Heart left ventricle (tissue), 16 donors: ENCODE measurements at regions of chr11 and their contacts with region 1.

Region 1: DNA sequence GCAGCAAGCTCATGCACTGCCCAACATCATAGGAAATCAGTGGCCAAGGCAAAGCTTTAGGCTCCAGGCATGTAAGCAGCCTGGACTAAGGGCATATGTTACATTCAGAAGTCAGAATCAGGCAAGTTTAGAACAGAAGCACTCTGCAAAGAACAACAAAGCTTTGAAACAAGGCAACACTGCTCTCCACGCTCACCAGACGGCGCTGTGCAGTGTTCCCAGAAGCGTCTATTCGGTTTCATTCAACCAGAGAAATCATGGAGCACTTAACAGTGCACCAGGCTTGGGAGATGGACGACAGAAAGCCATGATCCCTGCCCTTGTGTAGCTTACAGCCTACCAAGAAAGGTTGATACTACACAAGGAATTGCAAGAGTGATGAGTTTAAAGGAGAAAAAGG is 555.8 kb downstream of the BUD13 start:
- DNase-seq: peak in 1 of 5 donors; percentile 42
- ATAC-seq: peak in 2 of 4 donors; percentile 16 to 64
- H3K4me3 ChIP-seq: no peak overlapping the region
- H3K27ac ChIP-seq: no peak overlapping the region
- H3K4me1 ChIP-seq: peaks cover 0 to 7% (median 0%) of the 10 kb centered on the region in 12 donors
- H3K27me3 ChIP-seq: no peaks in the 10 kb centered on the region
- CTCF ChIP-seq: peak in 11 of 12 donors; percentile 40 to 83 (median 61)
- POLR2A ChIP-seq: no peak

Region 2: GRCh38 chr11:115941481-115941993 is 275.5 kb before region 1 on chr11:
- intact Hi-C with region 1: no loop called
- DNase-seq: peak; percentile 55 to 84 (median 77)
- ATAC-seq: peak; percentile 46 to 89 (median 86)
- H3K4me3 ChIP-seq: no peak overlapping the region
- H3K27ac ChIP-seq: peak overlapping the region in 6 of 12 donors; percentile 24 to 75 (median 62)
- H3K4me1 ChIP-seq: peaks cover 0 to 17% (median 0%) of the 10 kb centered on the region in 12 donors
- H3K27me3 ChIP-seq: peaks cover 0 to 7% (median 0%) of the 10 kb centered on the region in 9 donors
- CTCF ChIP-seq: no peak
- POLR2A ChIP-seq: no peak

Region 3: DNA sequence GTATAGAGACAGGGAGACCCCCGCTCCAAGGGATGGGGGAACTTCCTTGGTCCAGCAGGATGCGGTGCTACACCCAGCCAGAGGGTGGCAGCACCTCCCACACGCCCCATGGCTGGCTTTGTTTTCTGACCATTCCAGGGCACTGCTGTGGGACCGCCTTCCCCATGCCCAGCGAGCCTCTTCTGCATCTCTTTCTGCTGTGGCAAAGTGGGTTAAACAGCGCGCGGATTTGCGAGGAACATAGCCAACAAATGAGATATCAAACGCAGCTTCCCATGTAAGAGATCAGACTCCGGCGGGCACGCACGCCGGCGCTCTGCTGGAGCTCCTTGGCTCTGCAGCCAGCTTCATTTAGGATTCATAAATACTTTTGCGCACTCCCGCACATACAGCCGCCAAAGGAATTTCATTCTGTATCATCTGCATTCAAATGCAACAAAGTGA is 227.0 kb before region 1 on chr11:
- intact Hi-C with region 1: loop called in 4 of 10 experiments (anchors 5 to 10 kb)
- DNase-seq: peak in 2 of 5 donors; percentile 28 to 44
- ATAC-seq: peak in 3 of 4 donors; percentile 66 to 81 (median 75)
- H3K4me3 ChIP-seq: peak overlapping the region in 7 of 12 donors; percentile 12 to 38 (median 22)
- H3K27ac ChIP-seq: no peak overlapping the region
- H3K4me1 ChIP-seq: peaks cover 0 to 4% (median 0%) of the 10 kb centered on the region in 12 donors
- H3K27me3 ChIP-seq: peaks cover 0 to 3% (median 0%) of the 10 kb centered on the region in 9 donors
- CTCF ChIP-seq: peak; percentile 56 to 85 (median 72)
- POLR2A ChIP-seq: no peak